Heart right ventricle (tissue), 16 donors: ENCODE measurements at regions of chr14 and their contacts with region 1.

Region 1: DNA sequence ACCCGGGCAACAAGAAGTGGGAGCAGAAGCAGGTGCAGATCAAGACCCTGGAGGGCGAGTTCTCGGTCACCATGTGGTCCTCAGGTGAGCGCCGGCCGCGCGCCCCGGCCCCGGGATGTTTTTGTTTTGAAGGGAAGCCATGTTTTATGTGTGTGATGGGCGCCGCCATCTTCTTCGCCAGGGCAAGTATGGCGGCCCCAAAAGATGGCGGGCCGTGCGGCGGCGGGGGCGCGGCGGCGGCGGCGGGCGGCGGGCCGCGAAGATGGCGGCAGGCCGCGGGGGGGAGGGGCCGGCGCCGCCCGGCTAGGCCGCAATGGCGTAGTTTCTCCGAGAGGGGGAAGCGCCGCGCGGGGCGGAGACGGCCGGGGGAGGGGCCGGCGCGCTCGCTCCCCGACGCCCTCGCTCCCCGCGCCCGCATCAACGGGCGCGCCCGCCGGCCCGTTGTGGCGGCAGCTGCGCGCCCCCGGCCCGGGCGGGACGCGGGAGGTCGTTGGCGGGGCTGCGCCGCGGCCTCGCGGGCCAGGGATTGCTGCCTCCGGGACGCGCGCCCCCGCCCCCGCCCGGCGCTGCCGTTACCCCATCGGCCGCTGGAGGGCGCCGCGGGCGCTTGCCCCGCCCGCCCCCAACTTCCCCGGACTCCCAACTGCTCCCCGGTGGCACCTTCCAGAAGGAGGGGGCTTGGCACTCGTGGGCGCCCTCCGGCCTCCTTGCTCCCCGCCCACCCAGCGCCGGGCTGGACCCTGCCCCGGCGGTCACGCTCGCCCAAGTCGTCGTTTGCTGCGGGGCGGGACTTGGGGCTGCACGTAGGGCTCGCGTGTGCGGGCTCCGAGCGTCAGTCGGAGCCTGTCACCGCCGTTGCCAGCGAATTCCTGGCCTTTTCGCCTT is 1.1 kb downstream of the YY1 start:
- DNase-seq: peak; percentile 86 to 88
- ATAC-seq: peak; percentile 51 to 83 (median 74)
- H3K4me3 ChIP-seq: peak overlapping the region; percentile 91 to 100 (median 99)
- H3K27ac ChIP-seq: peak overlapping the region; percentile 91 to 100 (median 99)
- H3K4me1 ChIP-seq: peaks cover 15 to 69% (median 57%) of the 10 kb centered on the region in 9 donors
- H3K27me3 ChIP-seq: no peaks in the 10 kb centered on the region
- CTCF ChIP-seq: peak; percentile 56 to 85 (median 68)

Region 2: GRCh38 chr14:100278702-100279101 is 38.6 kb after region 1 on chr14:
- intact Hi-C with region 1: loop called in 2 of 10 experiments (anchors 5 kb)
- DNase-seq: no peak
- ATAC-seq: peak in 4 of 8 donors; percentile 20 to 66 (median 26)
- H3K4me3 ChIP-seq: no peak overlapping the region
- H3K27ac ChIP-seq: no peak overlapping the region
- H3K4me1 ChIP-seq: peaks cover 0 to 64% (median 18%) of the 10 kb centered on the region in 9 donors
- H3K27me3 ChIP-seq: no peaks in the 10 kb centered on the region
- CTCF ChIP-seq: peak in 4 of 9 donors; percentile 12 to 28 (median 20)

Region 3: GRCh38 chr14:100285021-100285912 is 45.2 kb after region 1 on chr14:
- intact Hi-C with region 1: loop called in 2 of 10 experiments (anchors 5 kb)
- DNase-seq: peak; percentile 46 to 82
- ATAC-seq: peak; percentile 80 to 96 (median 90)
- H3K4me3 ChIP-seq: peak overlapping the region; percentile 62 to 94 (median 88)
- H3K27ac ChIP-seq: peak overlapping the region; percentile 41 to 96 (median 90)
- H3K4me1 ChIP-seq: peaks cover 5 to 78% (median 33%) of the 10 kb centered on the region in 9 donors
- H3K27me3 ChIP-seq: no peaks in the 10 kb centered on the region
- CTCF ChIP-seq: peak; percentile 70 to 89 (median 82)

Region 4: DNA sequence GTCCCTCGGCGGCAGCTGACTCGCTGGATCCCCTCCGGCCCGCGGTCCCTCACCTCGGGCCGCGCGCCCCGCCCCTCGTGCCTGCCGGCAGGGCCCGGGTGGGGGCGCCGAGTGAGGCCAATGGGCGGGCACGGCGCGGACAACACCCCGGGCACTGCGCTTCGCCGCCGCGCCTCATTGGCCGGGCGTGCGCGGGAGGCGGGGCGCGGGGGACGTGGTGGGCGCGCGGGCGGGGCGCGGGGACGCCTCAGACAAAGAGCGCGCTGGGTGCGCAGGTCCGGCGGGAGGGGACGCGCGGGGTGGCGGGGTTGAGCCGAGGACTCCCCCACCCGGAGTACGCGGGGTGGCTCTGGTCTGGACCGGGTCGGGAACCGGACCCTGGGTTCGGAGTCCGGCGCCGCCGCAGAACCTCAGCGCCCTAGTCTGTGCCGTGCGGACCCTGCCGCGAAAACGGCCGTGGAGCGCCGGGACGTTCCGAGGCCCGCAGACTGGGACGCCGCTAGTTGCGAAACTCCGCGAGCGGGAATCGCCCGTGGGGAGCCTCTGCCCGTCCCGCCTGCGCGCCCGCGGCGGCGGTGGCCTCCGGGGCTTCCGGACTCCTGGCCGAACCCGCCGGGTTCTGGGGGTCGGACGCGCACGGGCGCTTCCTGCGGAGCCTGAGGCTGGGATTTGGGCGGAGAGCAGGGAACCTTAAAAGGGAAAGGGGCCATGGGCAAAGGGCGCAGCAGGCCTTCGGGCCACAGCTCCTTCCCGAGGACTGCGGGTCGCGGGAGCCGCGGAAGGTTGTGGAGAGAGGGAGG is 66.5 kb after region 1 on chr14 and contains the start of gene SLC25A29:
- intact Hi-C with region 1: loop called in 2 of 10 experiments (anchors 5 kb)
- DNase-seq: peak; percentile 88 to 90
- ATAC-seq: peak; percentile 87 to 94 (median 90)
- H3K4me3 ChIP-seq: peak within 1 kb of the TSS; percentile 65 to 99 (median 92)
- H3K27ac ChIP-seq: peak within 1 kb of the TSS; percentile 84 to 95 (median 90)
- H3K4me1 ChIP-seq: peaks cover 4 to 69% (median 45%) of the 10 kb centered on the region in 9 donors
- H3K27me3 ChIP-seq: no peaks in the 10 kb centered on the region
- CTCF ChIP-seq: no peak
- total RNA-seq, gene SLC25A29: 11.0 to 25.3 (median 21.7) TPM